ENCODE measurements at regions of chr2 and their contacts with region 1.

Region 1: GRCh38 chr2:186641807-186642321 is 52.0 kb upstream of the FAM171B start:
- DNase-seq: peak; percentile 81
- H3K4me3 Mint-ChIP-seq: no peak overlapping the region
- H3K27ac Mint-ChIP-seq: peak overlapping the region; percentile 46
- H3K4me1 Mint-ChIP-seq: peaks cover 6% of the 10 kb centered on the region
- H3K27me3 Mint-ChIP-seq: no peaks in the 10 kb centered on the region
- CTCF ChIP-seq: peak; percentile 81

Region 2: GRCh38 chr2:185608799-185609198 is 1033.1 kb before region 1 on chr2:
- CTCF ChIA-PET with region 1: interaction called, 3 read pairs
- POLR2A ChIA-PET with region 1: no interaction called
- intact Hi-C with region 1: loop called (anchors 5 kb)
- DNase-seq: peak; percentile 45
- H3K4me3 Mint-ChIP-seq: no peak overlapping the region
- H3K27ac Mint-ChIP-seq: no peak overlapping the region
- H3K4me1 Mint-ChIP-seq: peaks cover 7% of the 10 kb centered on the region
- H3K27me3 Mint-ChIP-seq: no peaks in the 10 kb centered on the region
- CTCF ChIP-seq: peak; percentile 42

Region 3: DNA sequence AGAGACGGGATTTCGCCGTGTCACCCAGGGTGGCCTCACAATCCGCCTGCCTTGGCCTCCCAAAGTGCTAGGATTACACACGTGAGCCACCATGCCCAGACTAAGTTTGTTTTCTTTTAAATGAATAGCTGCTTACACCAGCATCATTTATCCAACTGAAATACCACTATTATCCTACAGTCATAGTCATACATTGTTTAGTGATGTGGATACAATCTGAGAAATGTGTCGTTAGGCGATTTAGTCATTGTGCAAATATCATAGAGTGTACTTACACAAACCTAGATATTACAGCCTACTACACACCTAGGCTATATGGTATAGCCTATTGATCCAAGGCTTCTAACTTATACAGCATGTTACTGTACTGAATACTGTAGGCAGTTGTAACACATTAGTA is 145.5 kb before region 1 on chr2:
- CTCF ChIA-PET with region 1: interaction called, 162 read pairs
- POLR2A ChIA-PET with region 1: interaction called, 3 read pairs
- intact Hi-C with region 1: no loop called
- DNase-seq: no peak
- H3K4me3 Mint-ChIP-seq: no peak overlapping the region
- H3K27ac Mint-ChIP-seq: no peak overlapping the region
- H3K4me1 Mint-ChIP-seq: peaks cover 25% of the 10 kb centered on the region
- H3K27me3 Mint-ChIP-seq: no peaks in the 10 kb centered on the region
- CTCF ChIP-seq: no peak

Region 4: GRCh38 chr2:186575302-186575701 is 66.6 kb before region 1 on chr2:
- CTCF ChIA-PET with region 1: interaction called, 10 read pairs
- POLR2A ChIA-PET with region 1: no interaction called
- intact Hi-C with region 1: no loop called
- DNase-seq: peak; percentile 98
- H3K4me3 Mint-ChIP-seq: no peak overlapping the region
- H3K27ac Mint-ChIP-seq: peak overlapping the region; percentile 35
- H3K4me1 Mint-ChIP-seq: peaks cover 10% of the 10 kb centered on the region
- H3K27me3 Mint-ChIP-seq: no peaks in the 10 kb centered on the region
- CTCF ChIP-seq: no peak

Region 5: DNA sequence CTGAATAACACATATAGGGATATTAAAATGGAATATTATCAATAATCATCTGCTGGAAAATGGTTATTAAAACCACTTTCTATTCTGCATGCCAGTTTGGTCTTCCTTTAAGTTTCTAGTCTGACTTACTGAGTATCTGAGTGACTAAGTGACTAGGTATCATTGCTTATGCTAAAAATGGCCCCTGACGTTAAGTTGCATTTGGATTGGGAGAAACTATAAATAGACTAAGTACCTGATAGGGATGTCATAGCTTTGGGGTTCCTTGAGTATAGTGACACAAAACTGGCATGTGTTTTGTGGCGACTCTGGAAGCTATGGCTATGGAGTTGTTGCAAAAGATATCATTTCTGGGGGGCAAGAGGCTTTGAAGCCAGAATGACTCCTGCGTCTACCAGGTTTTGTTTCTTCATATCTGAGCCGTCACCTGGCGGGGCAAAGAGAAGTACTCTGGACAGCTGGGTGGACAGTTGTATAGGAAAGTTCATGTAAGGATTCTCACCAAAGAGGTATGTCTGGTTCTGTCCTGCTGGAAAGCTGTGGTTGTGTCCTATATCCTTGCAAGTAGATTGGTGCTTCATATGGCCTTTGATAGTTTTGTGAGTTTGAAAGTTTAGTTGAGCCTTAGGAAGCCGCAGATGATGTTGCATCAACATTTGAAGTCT is 34.1 kb before region 1 on chr2:
- CTCF ChIA-PET with region 1: interaction called, 18 read pairs
- POLR2A ChIA-PET with region 1: interaction called, 3 read pairs
- intact Hi-C with region 1: no loop called
- DNase-seq: no peak
- H3K4me3 Mint-ChIP-seq: no peak overlapping the region
- H3K27ac Mint-ChIP-seq: peak overlapping the region; percentile 65
- H3K4me1 Mint-ChIP-seq: no peaks in the 10 kb centered on the region
- H3K27me3 Mint-ChIP-seq: no peaks in the 10 kb centered on the region
- CTCF ChIP-seq: no peak